ENCODE measurements at regions of chr7 and their contacts with region 1.

Region 1: DNA sequence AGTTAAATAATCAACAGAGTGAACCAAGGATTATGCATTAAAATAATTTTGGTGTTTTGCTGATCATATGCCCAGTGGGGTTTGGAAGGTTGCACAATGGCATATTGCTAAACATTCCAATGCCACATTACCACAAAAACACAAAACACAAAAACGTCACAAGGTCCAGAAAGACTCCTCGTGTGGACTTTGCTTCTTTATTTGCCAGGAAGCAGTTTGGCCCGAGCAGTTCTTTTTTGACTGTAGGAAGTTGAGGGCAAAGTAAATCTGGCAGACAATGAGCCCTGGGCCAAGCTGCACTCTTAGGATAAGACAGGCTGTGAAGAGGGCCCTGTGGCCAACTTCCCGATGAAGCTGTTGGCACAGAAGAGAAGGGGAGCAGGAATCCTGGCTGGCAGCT is 39.2 kb upstream of the SLC35B4 start:
- DNase-seq: no peak
- ATAC-seq: no peak
- H3K4me3 ChIP-seq: no peak overlapping the region
- H3K27ac ChIP-seq: no peak overlapping the region
- H3K4me1 ChIP-seq: no peaks in the 10 kb centered on the region
- H3K27me3 ChIP-seq: peaks cover 9% of the 10 kb centered on the region; the same call in 1 of the 2 replicates
- CTCF ChIP-seq: no peak

Region 2: DNA sequence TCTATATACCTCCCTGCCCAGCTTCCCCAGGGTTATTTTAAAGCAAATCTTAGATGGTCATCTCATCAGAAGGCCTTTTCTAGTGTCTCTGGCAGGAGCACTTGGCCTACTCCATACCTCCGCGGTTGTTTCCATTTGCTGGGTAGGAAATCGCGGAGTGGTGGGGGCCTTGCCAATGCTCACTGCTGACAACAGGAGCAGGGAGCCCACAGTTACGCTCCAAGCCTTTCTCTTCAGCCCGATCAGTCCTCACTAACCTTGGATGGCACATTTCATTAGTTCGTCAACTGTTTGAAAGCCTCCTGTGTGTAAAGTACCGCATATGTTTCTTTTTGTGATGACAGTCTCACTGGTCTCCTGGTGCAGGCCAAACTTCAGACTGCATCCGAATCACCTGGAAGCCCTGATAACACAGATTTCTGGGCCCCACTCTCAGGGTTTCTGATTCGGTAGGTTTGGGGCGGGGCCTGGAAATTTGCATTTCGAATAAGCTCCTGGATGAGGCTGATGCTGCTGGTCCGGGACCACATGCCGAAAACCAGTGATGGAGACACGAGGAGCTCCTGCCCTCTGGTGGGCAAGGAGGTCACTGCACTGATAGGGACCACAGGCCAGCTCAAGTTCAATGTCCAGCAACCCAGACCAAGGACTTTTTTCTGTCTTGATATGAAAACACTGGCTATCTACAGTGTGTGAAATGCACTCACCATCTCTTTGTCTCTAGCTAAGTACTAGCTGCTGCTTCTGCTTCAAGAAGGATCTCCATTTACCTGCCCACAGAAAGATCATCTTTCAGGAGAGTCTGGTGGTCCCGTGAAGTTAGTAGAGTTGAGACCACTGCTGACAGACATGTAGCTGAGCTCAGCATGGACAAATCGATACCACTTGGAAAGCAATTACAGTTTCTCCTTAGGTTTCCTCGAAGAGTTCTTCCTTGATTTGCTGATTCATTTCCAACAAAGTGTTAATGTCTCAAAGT is 214.7 kb before region 1 on chr7:
- CTCF ChIA-PET with region 1: interaction called, 4 read pairs
- POLR2A ChIA-PET with region 1: no interaction called
- in situ Hi-C with region 1: no loop called
- intact Hi-C with region 1: loop called (anchors 10 kb)
- DNase-seq: peak; percentile 64
- ATAC-seq: peak; percentile 98
- H3K4me3 ChIP-seq: 0 out of 4 replicates have a peak overlapping the region, but pooled peaks of 1 of the 2 experiments have one; percentile 25
- H3K27ac ChIP-seq: no peak overlapping the region
- H3K4me1 ChIP-seq: no peaks in the 10 kb centered on the region
- H3K27me3 ChIP-seq: peaks cover 4% of the 10 kb centered on the region
- CTCF ChIP-seq: peak; percentile 92

Region 3: DNA sequence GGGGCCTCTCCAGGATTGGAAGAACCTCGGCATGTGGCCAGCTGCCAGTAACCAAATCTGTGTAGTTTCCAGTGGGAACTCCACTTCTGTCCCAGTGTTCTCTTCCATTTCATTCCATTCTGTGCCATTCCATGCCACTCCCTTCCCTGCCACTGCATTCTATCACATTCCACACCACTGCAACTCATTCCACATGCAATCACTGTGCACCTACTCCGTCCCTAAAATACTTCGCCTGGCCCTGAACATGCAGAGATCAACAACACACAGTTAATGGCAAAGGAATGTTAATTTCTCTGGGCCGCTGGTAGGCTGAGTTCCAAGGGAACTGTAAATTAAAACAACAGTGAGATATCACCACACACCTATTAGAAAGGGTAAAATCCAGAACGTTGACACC is 38.1 kb after region 1 on chr7:
- CTCF ChIA-PET with region 1: no interaction called
- POLR2A ChIA-PET with region 1: no interaction called
- in situ Hi-C with region 1: no loop called
- intact Hi-C with region 1: no loop called
- DNase-seq: no peak
- ATAC-seq: no peak
- H3K4me3 ChIP-seq: no peak overlapping the region
- H3K27ac ChIP-seq: no peak overlapping the region
- H3K4me1 ChIP-seq: no peaks in the 10 kb centered on the region
- H3K27me3 ChIP-seq: no peaks in the 10 kb centered on the region; the same call in 1 of the 2 replicates
- CTCF ChIP-seq: no peak

Measured in Panc1 (cell line).